K562 (cell line): ENCODE measurements at regions of chr15 and their contacts with region 1.

Region 1: DNA sequence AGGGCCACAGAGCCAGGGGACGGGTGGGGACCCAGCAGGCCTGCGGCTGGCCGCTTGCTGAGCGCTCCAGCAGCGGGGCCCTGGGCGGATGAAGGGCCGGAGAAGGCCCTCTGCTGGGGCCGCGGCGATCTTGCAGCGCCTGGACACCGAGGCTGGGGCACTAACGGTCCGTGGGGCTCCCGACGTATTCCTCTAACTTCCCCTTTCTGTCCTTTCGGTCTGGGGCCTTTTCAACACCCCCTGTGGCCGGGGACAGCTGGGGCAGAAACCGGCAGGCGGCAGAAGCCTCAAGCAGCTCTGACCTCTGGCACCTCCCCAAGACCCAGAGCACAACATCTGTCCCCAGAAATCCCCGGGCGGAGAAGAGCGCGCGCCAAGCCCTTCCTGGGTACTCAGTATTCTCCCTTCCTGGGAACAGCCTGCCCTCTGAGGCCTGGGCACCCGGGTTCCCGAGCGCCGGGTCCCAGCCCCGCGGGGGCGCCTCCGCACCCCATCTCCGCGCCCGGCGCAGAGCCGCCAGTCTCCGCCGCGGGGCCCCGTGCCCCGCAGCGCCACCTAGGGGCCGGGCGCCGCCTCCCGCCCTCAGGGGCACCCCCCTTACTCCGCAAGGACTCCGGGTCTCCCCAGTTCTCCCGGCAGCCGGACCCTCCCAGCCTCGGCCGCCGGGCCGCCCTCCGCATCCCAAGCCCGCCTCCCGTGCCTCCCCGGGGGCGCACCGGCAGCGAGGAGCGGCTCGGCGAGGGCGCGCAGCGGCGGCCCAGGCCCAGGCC is 582 bp upstream of the SLCO3A1 start:
- DNase-seq: peak; percentile 64 to 88 (median 86)
- ATAC-seq: peak; percentile 98
- H3K4me3 ChIP-seq: peak overlapping the region; percentile 47
- H3K27ac ChIP-seq: no peak overlapping the region
- H3K4me1 ChIP-seq: peaks cover 0 to 17% of the 10 kb centered on the region in 2 experiments; a peak in 2 of 5 replicates
- H3K27me3 ChIP-seq: peaks cover 0 to 5% of the 10 kb centered on the region in 2 experiments; a peak in 3 of 5 replicates
- CTCF ChIP-seq: peak; percentile 54 to 82 (median 67); a peak in 5 of 6 replicates
- EP300 ChIP-seq: no peak
- POLR2A ChIP-seq: no peak
- RAD21 ChIP-seq: peak; percentile 59 to 64

Region 2: DNA sequence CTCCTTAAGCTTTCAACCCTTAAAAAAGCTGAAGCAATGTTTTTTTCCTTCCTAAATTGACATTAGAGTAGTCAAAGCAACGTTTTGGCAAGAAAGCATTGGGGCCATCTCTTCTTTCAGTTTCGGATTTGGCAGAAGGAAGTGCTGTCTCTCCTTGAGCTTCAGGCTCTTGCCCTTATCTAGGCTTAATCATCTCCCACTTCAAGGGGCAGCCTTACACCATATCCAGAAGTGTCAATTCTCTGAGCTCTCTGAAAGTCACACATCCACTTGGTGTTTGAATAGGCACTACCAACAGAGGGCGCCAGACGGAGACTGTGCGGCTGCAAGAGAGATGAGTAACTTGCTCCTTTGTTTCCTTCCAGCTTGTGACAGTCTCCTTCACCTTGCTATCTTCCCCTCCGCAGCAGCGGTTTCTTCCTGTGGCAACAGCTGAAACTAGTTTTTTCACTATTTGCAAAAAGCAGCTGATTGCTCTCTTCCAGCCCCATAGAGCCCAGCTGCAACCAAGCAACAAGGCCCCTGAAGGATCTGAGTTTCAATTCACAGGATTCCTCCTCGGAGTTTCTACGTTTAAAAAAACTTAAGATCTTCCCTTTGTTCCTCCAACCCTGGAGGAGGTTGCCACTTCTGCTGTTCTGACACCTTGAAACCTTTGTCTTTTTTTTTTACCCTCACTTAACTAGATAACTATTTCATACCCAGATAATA is 146.4 kb before region 1 on chr15:
- CTCF ChIA-PET with region 1: interaction called, 3 read pairs
- POLR2A ChIA-PET with region 1: no interaction called
- in situ Hi-C with region 1: no loop called
- intact Hi-C with region 1: loop called (anchors 2 kb)
- DNase-seq: peak; percentile 41 to 71 (median 51)
- ATAC-seq: peak; percentile 82
- H3K4me3 ChIP-seq: no peak overlapping the region
- H3K27ac ChIP-seq: no peak overlapping the region
- H3K4me1 ChIP-seq: no peaks in the 10 kb centered on the region
- H3K27me3 ChIP-seq: no peaks in the 10 kb centered on the region
- CTCF ChIP-seq: peak; percentile 79 to 88 (median 79)
- EP300 ChIP-seq: no peak
- POLR2A ChIP-seq: no peak
- RAD21 ChIP-seq: peak; percentile 42 to 54; a peak in 3 of 4 replicates

Region 3: DNA sequence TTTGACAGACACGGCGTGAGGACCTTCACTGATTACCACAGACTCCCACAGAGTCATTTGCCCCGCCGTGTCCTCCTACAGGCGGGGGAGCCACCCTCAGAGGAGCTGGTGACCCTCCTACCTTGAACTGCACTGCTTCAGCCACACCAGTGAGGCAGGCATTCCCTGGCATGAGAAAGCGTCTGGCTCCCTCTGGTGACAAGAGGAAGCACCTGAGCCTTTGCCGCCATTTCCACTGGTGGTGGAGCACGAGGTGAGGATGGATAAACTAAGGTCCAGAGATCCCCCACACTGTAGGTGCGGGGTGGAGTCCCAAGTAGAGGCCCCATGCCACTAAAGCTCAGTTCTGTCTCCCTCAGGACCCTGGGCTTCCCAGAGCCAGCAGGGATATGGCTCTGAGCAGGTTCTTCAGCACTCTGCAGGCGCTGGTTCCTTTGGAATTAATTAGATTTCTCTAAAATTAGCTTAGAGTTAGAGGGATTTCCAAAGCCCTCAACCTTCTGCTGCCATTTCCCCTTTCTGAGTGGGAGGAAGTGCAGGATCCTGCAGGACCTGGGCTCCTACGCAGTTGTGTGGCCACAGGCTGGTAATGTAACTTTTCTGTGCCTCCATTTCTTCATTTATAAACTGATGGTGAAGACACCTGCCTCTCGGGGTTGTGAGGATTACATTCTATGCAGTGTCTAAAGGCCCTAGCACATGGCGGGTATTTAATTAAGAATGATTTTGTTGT is 224.6 kb after region 1 on chr15:
- CTCF ChIA-PET with region 1: no interaction called
- POLR2A ChIA-PET with region 1: no interaction called
- in situ Hi-C with region 1: no loop called
- intact Hi-C with region 1: loop called (anchors 5 kb)
- DNase-seq: peak; percentile 55 to 59 (median 57)
- ATAC-seq: peak; percentile 88
- H3K4me3 ChIP-seq: no peak overlapping the region
- H3K27ac ChIP-seq: no peak overlapping the region
- H3K4me1 ChIP-seq: no peaks in the 10 kb centered on the region
- H3K27me3 ChIP-seq: peaks cover 0 to 36% of the 10 kb centered on the region in 2 experiments; a peak in 3 of 5 replicates
- CTCF ChIP-seq: peak; percentile 78 to 80 (median 79)
- EP300 ChIP-seq: no peak
- POLR2A ChIP-seq: no peak
- RAD21 ChIP-seq: peak; percentile 81 to 85